Activated T-helper 1 cell treated with anti-CD3 and anti-CD28 coated beads, Interleukin-12 subunit alpha, Interleukin-12 subunit beta, Interleukin-2, Interleukin-4 antibody, amounts not matched to agents 30 ng/mL and 10 ng/mL and 1 ng/mL, durations not matched to agents 14 hours and 24 hours and 36 hours (primary cell): ENCODE measurements at regions of chr1 and their contacts with region 1.

Region 1: GRCh38 chr1:194289569-194290266 is 1103.3 kb upstream of the B3GALT2 start:
- DNase-seq: peak; percentile 20
- H3K4me3 Mint-ChIP-seq: no peak overlapping the region
- H3K27ac Mint-ChIP-seq: no peak overlapping the region
- H3K4me1 Mint-ChIP-seq: peaks cover 18% of the 10 kb centered on the region
- H3K27me3 Mint-ChIP-seq: no peaks in the 10 kb centered on the region

Region 2: GRCh38 chr1:194102606-194103005 is 187.1 kb before region 1 on chr1:
- intact Hi-C with region 1: loop called (anchors 5 kb)
- DNase-seq: no peak
- H3K4me3 Mint-ChIP-seq: no peak overlapping the region
- H3K27ac Mint-ChIP-seq: no peak overlapping the region
- H3K4me1 Mint-ChIP-seq: no peaks in the 10 kb centered on the region
- H3K27me3 Mint-ChIP-seq: peaks cover 2% of the 10 kb centered on the region